Caco-2 (cell line): ENCODE measurements at regions of chr9 and their contacts with region 1.

Region 1: GRCh38 chr9:114906908-114907571 is 23.4 kb downstream of the TNFSF8 start:
- DNase-seq: peak; percentile 66 to 79
- H3K4me3 ChIP-seq: no peak overlapping the region
- H3K4me3 Mint-ChIP-seq: no peak overlapping the region
- H3K27ac Mint-ChIP-seq: peak overlapping the region; percentile 92
- H3K4me1 ChIP-seq: peaks cover 35% of the 10 kb centered on the region
- H3K4me1 Mint-ChIP-seq: peaks cover 34% of the 10 kb centered on the region
- H3K27me3 ChIP-seq: no peaks in the 10 kb centered on the region
- H3K27me3 Mint-ChIP-seq: no peaks in the 10 kb centered on the region
- CTCF ChIP-seq: peak; percentile 63 to 71

Region 2: GRCh38 chr9:114662081-114662989 is 244.7 kb before region 1 on chr9:
- CTCF ChIA-PET with region 1: no interaction called
- POLR2A ChIA-PET with region 1: no interaction called
- intact Hi-C with region 1: loop called (anchors 1 kb)
- DNase-seq: peak; percentile 60 to 71
- H3K4me3 ChIP-seq: no peak overlapping the region
- H3K4me3 Mint-ChIP-seq: no peak overlapping the region
- H3K27ac Mint-ChIP-seq: no peak overlapping the region
- H3K4me1 ChIP-seq: no peaks in the 10 kb centered on the region
- H3K4me1 Mint-ChIP-seq: no peaks in the 10 kb centered on the region
- H3K27me3 ChIP-seq: no peaks in the 10 kb centered on the region; the same call in 1 of the 2 replicates
- H3K27me3 Mint-ChIP-seq: peaks cover 11% of the 10 kb centered on the region
- CTCF ChIP-seq: peak; percentile 83

Region 3: DNA sequence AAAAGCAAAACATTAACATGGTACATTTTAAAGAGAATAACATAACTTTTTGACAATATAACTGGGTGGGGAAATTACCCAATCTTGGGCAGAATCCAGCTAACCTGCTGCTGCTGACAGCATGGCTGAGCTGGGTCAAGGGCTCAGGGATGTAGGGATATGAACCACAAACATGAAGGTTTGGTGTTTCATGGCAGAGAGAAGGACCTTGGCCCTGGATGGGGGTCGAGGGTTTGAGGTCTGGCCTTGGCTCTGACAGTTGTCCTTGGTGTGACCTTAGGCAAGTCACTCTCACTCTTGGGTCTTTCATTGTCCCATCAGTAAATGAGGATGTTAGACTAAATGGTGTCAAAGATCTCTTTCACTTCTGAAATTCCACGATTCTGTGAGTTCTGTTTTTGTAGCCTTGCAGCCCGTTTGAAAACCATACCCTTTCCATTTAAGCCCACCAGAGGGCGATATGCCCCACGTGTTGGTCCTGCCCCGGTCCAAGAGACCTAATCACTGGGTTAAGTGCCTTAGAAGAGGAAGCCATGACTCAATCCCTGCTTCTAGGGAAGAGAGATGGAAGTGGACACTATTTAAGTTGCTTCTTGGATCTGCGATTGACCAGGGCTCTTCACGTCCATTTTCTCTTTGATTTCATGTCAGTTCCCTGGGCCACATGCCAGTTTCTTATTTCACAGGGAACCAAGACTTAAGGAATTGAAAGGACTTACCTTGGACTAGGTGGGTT is 168.3 kb before region 1 on chr9:
- CTCF ChIA-PET with region 1: interaction called, 15 read pairs
- POLR2A ChIA-PET with region 1: no interaction called
- intact Hi-C with region 1: loop called (anchors 1 kb)
- DNase-seq: peak; percentile 68 to 78
- H3K4me3 ChIP-seq: no peak overlapping the region
- H3K4me3 Mint-ChIP-seq: no peak overlapping the region
- H3K27ac Mint-ChIP-seq: no peak overlapping the region
- H3K4me1 ChIP-seq: no peaks in the 10 kb centered on the region
- H3K4me1 Mint-ChIP-seq: no peaks in the 10 kb centered on the region
- H3K27me3 ChIP-seq: no peaks in the 10 kb centered on the region
- H3K27me3 Mint-ChIP-seq: no peaks in the 10 kb centered on the region
- CTCF ChIP-seq: peak; percentile 75 to 83

Region 4: GRCh38 chr9:114805670-114806525 is 101.1 kb before region 1 on chr9 and contains the start of gene TNFSF15:
- CTCF ChIA-PET with region 1: interaction called, 3 read pairs
- POLR2A ChIA-PET with region 1: no interaction called
- intact Hi-C with region 1: loop called (anchors 1 kb)
- DNase-seq: peak; percentile 63 to 80
- H3K4me3 ChIP-seq: no peak within 1 kb of the TSS
- H3K4me3 Mint-ChIP-seq: peak within 1 kb of the TSS; percentile 56
- H3K27ac Mint-ChIP-seq: peak within 1 kb of the TSS; percentile 25
- H3K4me1 ChIP-seq: peaks cover 40% of the 10 kb centered on the region
- H3K4me1 Mint-ChIP-seq: peaks cover 29% of the 10 kb centered on the region
- H3K27me3 ChIP-seq: no peaks in the 10 kb centered on the region
- H3K27me3 Mint-ChIP-seq: peaks cover 6% of the 10 kb centered on the region
- CTCF ChIP-seq: no peak
- total RNA-seq, gene TNFSF15: 0.66 and 1.00 TPM in 2 replicates

Region 5: GRCh38 chr9:114869845-114870244 is 37.2 kb before region 1 on chr9:
- CTCF ChIA-PET with region 1: no interaction called
- POLR2A ChIA-PET with region 1: no interaction called
- intact Hi-C with region 1: no loop called
- DNase-seq: peak; percentile 38 to 65
- H3K4me3 ChIP-seq: no peak overlapping the region
- H3K4me3 Mint-ChIP-seq: no peak overlapping the region
- H3K27ac Mint-ChIP-seq: no peak overlapping the region
- H3K4me1 ChIP-seq: 0 out of 2 replicates have a peak, but pooled peaks cover 8% of the 10 kb centered on the region
- H3K4me1 Mint-ChIP-seq: no peaks in the 10 kb centered on the region
- H3K27me3 ChIP-seq: no peaks in the 10 kb centered on the region
- H3K27me3 Mint-ChIP-seq: no peaks in the 10 kb centered on the region
- CTCF ChIP-seq: no peak

Region 6: DNA sequence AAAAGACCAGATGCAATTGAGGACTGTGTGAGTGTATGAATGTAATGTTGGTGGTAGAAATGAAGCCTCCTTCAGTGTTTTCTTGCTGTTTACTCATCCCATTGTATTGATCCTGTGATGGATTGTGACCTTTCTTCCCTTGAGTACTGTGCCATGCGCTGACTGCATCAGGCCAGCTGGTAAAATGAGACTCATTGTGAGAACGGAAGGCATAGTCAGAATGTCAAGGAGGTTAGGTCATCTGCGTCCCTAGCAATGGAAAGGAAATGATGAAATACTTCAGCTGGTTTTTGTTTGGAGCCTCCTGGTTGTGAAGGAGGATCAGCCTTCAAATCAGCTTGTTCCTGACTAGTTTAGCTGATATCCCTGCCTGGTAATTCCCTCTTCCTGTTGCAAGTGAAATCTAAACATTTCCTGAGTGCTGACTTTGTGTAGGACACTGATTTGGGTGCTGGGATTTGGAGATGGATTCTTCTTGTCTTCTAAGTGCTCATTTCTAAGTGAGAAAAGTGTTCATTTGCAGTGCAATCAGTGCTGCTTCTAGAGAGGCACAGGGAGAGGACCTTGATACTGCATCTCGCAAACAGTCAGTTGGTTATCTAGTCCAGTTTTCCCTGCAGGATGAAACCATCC is 12.1 kb before region 1 on chr9:
- CTCF ChIA-PET with region 1: interaction called, 4 read pairs
- POLR2A ChIA-PET with region 1: interaction called, 3 read pairs
- intact Hi-C with region 1: loop called (anchors 2 kb)
- DNase-seq: peak in 1 of 2 experiments; percentile 26
- H3K4me3 ChIP-seq: no peak overlapping the region
- H3K4me3 Mint-ChIP-seq: no peak overlapping the region
- H3K27ac Mint-ChIP-seq: peak overlapping the region; percentile 43
- H3K4me1 ChIP-seq: peaks cover 12% of the 10 kb centered on the region; the same call in 1 of the 2 replicates
- H3K4me1 Mint-ChIP-seq: peaks cover 19% of the 10 kb centered on the region
- H3K27me3 ChIP-seq: no peaks in the 10 kb centered on the region
- H3K27me3 Mint-ChIP-seq: no peaks in the 10 kb centered on the region
- CTCF ChIP-seq: no peak

Region 7: DNA sequence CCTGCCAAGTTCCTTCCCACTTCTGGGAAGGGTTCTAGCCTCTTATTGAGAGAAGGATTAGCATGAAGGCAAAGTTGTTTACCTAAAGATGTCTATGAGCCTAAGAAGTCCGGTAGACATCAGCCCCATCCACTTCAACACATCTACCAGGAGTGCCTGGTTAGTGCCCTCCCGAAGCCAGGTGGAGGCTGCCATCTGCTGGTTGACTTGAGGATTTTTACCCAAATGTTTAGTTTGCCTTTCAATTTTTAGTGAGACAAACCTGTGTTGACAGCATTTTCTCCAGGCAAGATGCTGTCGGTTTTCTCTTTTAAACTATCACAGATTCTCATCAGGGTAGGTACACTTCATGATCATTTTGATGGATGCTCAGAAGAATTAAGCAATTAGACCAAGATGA is 107.0 kb after region 1 on chr9:
- CTCF ChIA-PET with region 1: interaction called, 8 read pairs
- POLR2A ChIA-PET with region 1: no interaction called
- intact Hi-C with region 1: loop called (anchors 1 kb)
- DNase-seq: peak; percentile 77 to 78
- H3K4me3 ChIP-seq: no peak overlapping the region
- H3K4me3 Mint-ChIP-seq: no peak overlapping the region
- H3K27ac Mint-ChIP-seq: no peak overlapping the region
- H3K4me1 ChIP-seq: peaks cover 13% of the 10 kb centered on the region
- H3K4me1 Mint-ChIP-seq: peaks cover 29% of the 10 kb centered on the region
- H3K27me3 ChIP-seq: no peaks in the 10 kb centered on the region
- H3K27me3 Mint-ChIP-seq: no peaks in the 10 kb centered on the region
- CTCF ChIP-seq: peak; percentile 77 to 85

Region 8: GRCh38 chr9:115117999-115118878 is 211.2 kb after region 1 on chr9 and contains the start of gene TNC:
- CTCF ChIA-PET with region 1: no interaction called
- POLR2A ChIA-PET with region 1: no interaction called
- intact Hi-C with region 1: no loop called
- DNase-seq: peak; percentile 22 to 38
- H3K4me3 ChIP-seq: peak within 1 kb of the TSS; percentile 27
- H3K4me3 Mint-ChIP-seq: peak within 1 kb of the TSS; percentile 79
- H3K27ac Mint-ChIP-seq: peak within 1 kb of the TSS; percentile 42
- H3K4me1 ChIP-seq: no peaks in the 10 kb centered on the region
- H3K4me1 Mint-ChIP-seq: no peaks in the 10 kb centered on the region
- H3K27me3 ChIP-seq: no peaks in the 10 kb centered on the region; the same call in 1 of the 2 replicates
- H3K27me3 Mint-ChIP-seq: no peaks in the 10 kb centered on the region
- CTCF ChIP-seq: no peak
- total RNA-seq, gene TNC: 11.4 and 17.6 TPM in 2 replicates